Gastrocnemius medialis (tissue), 4 donors: ENCODE measurements at regions of chr4 and their contacts with region 1.

Region 1: DNA sequence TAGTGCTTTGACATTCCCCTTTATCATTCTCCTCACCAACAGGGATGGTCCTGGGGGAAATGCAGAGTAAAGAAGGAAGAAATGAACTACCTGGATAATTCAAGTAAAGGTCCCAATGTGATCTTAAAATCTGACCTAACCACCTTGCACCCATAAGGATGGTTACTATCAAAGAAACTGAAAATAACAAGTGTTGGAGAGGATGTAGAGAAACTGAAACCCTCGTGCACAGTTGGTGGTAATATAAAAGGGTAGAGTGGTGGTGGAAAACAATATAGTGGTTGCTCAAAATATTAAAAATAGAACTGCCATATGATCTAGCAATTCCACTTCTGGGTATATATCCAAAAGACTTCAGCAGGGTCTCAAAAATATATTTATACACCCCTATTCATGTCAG is 298.6 kb upstream of the PPARGC1A start:
- DNase-seq: no peak
- ATAC-seq: no peak
- H3K4me3 ChIP-seq: no peak overlapping the region
- H3K27ac ChIP-seq: no peak overlapping the region
- H3K4me1 ChIP-seq: no peaks in the 10 kb centered on the region
- H3K27me3 ChIP-seq: no peaks in the 10 kb centered on the region
- CTCF ChIP-seq: no peak
- POLR2A ChIP-seq: no peak

Region 2: GRCh38 chr4:24226023-24226422 is 37.6 kb after region 1 on chr4:
- in situ Hi-C with region 1: no loop called
- intact Hi-C with region 1: no loop called
- DNase-seq: no peak
- ATAC-seq: no peak
- H3K4me3 ChIP-seq: no peak overlapping the region
- H3K27ac ChIP-seq: no peak overlapping the region
- H3K4me1 ChIP-seq: no peaks in the 10 kb centered on the region
- H3K27me3 ChIP-seq: no peaks in the 10 kb centered on the region
- CTCF ChIP-seq: no peak
- POLR2A ChIP-seq: no peak

Region 3: GRCh38 chr4:24266951-24267738 is 78.7 kb after region 1 on chr4:
- in situ Hi-C with region 1: no loop called
- intact Hi-C with region 1: loop called (anchors 5 kb)
- DNase-seq: no peak
- ATAC-seq: no peak
- H3K4me3 ChIP-seq: no peak overlapping the region
- H3K27ac ChIP-seq: peak overlapping the region in 2 of 4 donors; percentile 79 to 83
- H3K4me1 ChIP-seq: peaks cover 18 to 36% of the 10 kb centered on the region in 2 donors
- H3K27me3 ChIP-seq: no peaks in the 10 kb centered on the region
- CTCF ChIP-seq: no peak
- POLR2A ChIP-seq: no peak